Natural killer cell (primary cell): ENCODE measurements at regions of chr1 and their contacts with region 1.

Region 1: GRCh38 chr1:149887456-149888247 is 11.7 kb upstream of the BOLA1 start:
- DNase-seq: peak; percentile 74 to 95
- ATAC-seq: peak; percentile 59 to 80 (median 63)
- H3K4me3 ChIP-seq: peak overlapping the region; percentile 58
- H3K4me3 Mint-ChIP-seq: no peak overlapping the region
- H3K27ac ChIP-seq: peak overlapping the region; percentile 99
- H3K27ac Mint-ChIP-seq: no peak overlapping the region
- H3K4me1 ChIP-seq: peaks cover 28% of the 10 kb centered on the region
- H3K4me1 Mint-ChIP-seq: no peaks in the 10 kb centered on the region
- H3K27me3 ChIP-seq: no peaks in the 10 kb centered on the region
- H3K27me3 Mint-ChIP-seq: no peaks in the 10 kb centered on the region
- CTCF ChIP-seq: no peak

Region 2: DNA sequence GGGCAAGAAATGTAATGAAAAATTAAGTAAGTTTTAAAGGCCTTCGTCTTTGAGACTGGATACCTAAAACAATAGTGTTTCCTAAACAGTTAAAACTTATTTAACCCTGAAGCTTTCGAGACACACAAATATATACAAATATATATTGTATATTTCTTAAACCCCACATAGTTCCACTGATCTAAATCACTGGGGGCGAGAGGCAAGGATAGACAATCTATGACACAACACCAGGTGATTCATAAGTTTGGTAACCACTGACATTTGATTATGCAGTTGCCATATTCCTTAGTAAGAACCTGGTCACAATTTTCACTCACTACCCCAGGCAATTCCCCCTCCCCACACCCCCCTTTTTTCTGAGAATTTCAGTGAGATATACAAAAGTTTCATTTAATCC is 43.6 kb before region 1 on chr1:
- intact Hi-C with region 1: no loop called
- DNase-seq: peak in 1 of 2 donors; percentile 47
- ATAC-seq: no peak
- H3K4me3 ChIP-seq: peak overlapping the region; percentile 52
- H3K4me3 Mint-ChIP-seq: peak overlapping the region; percentile 91
- H3K27ac ChIP-seq: peak overlapping the region; percentile 63
- H3K27ac Mint-ChIP-seq: peak overlapping the region; percentile 85 to 92
- H3K4me1 ChIP-seq: peaks cover 7% of the 10 kb centered on the region
- H3K4me1 Mint-ChIP-seq: peaks cover 34 to 53% of the 10 kb centered on the region in 2 donors
- H3K27me3 ChIP-seq: no peaks in the 10 kb centered on the region
- H3K27me3 Mint-ChIP-seq: no peaks in the 10 kb centered on the region
- CTCF ChIP-seq: no peak

Region 3: GRCh38 chr1:149899460-149900293 is 12.0 kb after region 1 on chr1 and contains the start of gene BOLA1:
- intact Hi-C with region 1: loop called (anchors 1 kb)
- DNase-seq: peak; percentile 74 to 91
- ATAC-seq: peak; percentile 97 to 99 (median 98)
- H3K4me3 ChIP-seq: peak within 1 kb of the TSS; percentile 79
- H3K4me3 Mint-ChIP-seq: peak within 1 kb of the TSS; percentile 94
- H3K27ac ChIP-seq: peak within 1 kb of the TSS; percentile 79
- H3K27ac Mint-ChIP-seq: peak within 1 kb of the TSS; percentile 90 to 94
- H3K4me1 ChIP-seq: peaks cover 14% of the 10 kb centered on the region
- H3K4me1 Mint-ChIP-seq: peaks cover 8 to 21% of the 10 kb centered on the region in 2 donors
- H3K27me3 ChIP-seq: no peaks in the 10 kb centered on the region
- H3K27me3 Mint-ChIP-seq: no peaks in the 10 kb centered on the region
- CTCF ChIP-seq: no peak
- total RNA-seq, gene BOLA1: 7.0 to 8.3 (median 7.9) TPM

Region 4: DNA sequence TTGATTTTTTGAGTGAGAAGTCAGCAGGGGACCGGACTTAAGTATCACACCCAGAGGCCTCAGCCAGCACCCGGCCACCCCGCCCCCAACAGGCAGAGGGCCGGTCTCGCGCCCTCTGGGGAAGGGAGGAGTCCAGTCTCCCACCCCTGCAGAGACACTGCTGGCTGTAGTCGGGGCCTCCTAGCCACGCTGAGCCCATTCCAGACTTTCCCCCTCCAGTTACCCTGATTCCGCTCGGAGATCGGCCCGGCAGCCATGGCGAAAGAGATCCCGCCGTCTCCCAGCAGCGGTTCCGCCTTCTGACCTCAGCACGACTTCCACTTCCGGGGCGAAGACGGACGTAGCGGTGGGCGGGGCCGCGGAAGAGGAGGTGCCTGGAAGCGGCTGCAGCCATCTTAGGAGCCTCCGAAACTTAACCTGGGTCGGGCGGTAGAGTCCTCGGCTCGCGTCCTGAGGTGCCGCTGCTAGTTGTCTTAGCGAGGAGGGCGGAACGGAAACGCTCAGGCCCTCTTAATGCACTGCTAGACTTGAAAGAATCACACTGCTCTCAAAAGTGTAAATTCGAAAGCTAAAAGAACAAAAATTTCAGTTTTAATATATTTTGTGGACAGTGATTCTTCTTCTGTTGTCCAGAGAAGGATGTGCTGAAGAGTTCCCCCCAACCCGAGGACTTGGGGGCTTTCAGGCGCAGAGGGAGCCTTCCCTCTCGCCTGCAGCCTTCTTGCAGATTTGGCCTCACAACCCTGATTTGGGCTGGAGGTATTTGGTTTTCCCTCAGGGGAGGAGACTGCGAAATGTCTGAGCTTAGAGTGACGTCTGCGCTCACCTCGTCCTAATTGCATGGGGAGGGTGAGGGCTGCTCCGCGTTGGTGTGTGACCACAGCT is 40.1 kb after region 1 on chr1 and contains the start of gene SF3B4:
- intact Hi-C with region 1: loop called (anchors 1 kb)
- DNase-seq: peak; percentile 96 to 98
- ATAC-seq: peak; percentile 93 to 98 (median 94)
- H3K4me3 ChIP-seq: peak within 1 kb of the TSS; percentile 99
- H3K4me3 Mint-ChIP-seq: peak within 1 kb of the TSS; percentile 98
- H3K27ac ChIP-seq: peak within 1 kb of the TSS; percentile 99
- H3K27ac Mint-ChIP-seq: peak within 1 kb of the TSS; percentile 96 to 98
- H3K4me1 ChIP-seq: peaks cover 33% of the 10 kb centered on the region
- H3K4me1 Mint-ChIP-seq: peaks cover 44 to 57% of the 10 kb centered on the region in 2 donors
- H3K27me3 ChIP-seq: no peaks in the 10 kb centered on the region
- H3K27me3 Mint-ChIP-seq: peaks cover 6% of the 10 kb centered on the region in 2 donors
- CTCF ChIP-seq: no peak
- total RNA-seq, gene SF3B4: 67.3 to 73.7 (median 68.5) TPM

Region 5: DNA sequence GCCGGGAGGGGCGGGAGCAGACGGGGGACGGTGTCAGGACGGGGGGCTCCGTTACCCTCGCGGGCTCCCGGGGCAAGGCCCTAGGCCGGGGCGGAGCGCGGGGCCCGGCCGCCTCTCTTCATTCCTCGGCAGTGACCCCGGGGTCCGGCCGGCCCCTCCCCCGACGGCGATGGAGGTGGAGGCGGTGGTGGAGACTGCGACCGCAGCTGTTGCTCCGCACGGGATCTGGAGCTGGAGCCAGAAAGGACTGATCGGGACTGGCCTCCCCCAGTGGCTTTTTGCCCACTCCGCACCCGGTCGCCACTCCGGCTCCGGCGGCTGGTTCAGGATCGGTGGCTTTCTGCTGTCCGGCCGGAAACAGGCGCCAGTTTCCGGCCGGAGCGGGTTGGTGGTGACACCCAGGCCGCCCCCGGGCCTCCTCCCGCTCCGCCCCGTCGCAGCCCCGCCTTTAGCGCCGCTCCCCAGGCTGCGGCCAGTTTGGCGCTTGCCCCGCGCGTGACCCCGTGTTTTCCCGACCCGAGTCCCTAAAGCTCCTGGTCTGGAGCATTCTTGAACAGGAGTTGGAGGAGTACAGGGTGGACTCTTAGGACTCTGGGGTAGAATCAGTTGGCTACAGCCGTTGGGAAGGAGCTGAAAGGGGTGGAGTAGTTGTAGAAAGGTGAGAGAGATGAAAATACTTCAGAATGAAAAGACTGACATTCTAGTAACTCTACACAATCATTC is 122.9 kb after region 1 on chr1 and contains the start of gene OTUD7B:
- intact Hi-C with region 1: no loop called
- DNase-seq: peak; percentile 72 to 75
- ATAC-seq: peak; percentile 90 to 94 (median 92)
- H3K4me3 ChIP-seq: peak within 1 kb of the TSS; percentile 92
- H3K4me3 Mint-ChIP-seq: peak within 1 kb of the TSS; percentile 98
- H3K27ac ChIP-seq: peak within 1 kb of the TSS; percentile 64
- H3K27ac Mint-ChIP-seq: peak within 1 kb of the TSS; percentile 79 to 96
- H3K4me1 ChIP-seq: peaks cover 8% of the 10 kb centered on the region
- H3K4me1 Mint-ChIP-seq: peaks cover 35 to 43% of the 10 kb centered on the region in 2 donors
- H3K27me3 ChIP-seq: no peaks in the 10 kb centered on the region
- H3K27me3 Mint-ChIP-seq: no peaks in the 10 kb centered on the region
- CTCF ChIP-seq: no peak
- total RNA-seq, gene OTUD7B: 10.6 to 19.6 (median 12.3) TPM